AG04450 (cell line): ENCODE measurements at regions of chr16 and their contacts with region 1.

Region 1: DNA sequence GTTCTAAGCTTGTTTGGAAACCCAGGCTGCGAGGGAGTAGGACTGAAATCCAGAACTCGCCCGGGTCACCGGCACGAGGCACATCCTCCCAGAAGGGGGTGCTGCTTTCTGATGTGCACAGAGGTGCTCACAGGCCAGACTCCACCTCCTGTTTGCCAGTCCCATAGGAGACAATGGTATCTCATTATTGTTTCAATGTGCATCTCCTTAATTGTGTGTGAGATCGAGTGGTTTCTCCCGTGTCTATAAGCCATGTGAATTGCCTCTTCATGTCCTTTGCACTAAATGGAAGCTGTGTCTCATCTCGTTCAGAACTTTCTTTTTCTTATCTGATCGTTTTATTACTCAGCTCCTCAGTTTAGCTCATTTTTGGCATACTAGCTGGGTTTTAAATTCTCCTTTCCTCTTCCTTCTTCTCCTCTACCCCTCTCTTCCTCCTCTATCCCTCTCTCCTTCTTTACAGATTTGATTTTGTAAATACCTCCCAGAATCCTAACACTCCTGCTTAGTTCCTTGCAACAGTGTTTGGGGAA is 32.1 kb upstream of the PRKCB start:
- DNase-seq: no peak
- H3K4me3 ChIP-seq: no peak overlapping the region
- H3K27ac ChIP-seq: no peak overlapping the region
- H3K27me3 ChIP-seq: peaks cover 5% of the 10 kb centered on the region
- CTCF ChIP-seq: peak; percentile 53

Region 2: DNA sequence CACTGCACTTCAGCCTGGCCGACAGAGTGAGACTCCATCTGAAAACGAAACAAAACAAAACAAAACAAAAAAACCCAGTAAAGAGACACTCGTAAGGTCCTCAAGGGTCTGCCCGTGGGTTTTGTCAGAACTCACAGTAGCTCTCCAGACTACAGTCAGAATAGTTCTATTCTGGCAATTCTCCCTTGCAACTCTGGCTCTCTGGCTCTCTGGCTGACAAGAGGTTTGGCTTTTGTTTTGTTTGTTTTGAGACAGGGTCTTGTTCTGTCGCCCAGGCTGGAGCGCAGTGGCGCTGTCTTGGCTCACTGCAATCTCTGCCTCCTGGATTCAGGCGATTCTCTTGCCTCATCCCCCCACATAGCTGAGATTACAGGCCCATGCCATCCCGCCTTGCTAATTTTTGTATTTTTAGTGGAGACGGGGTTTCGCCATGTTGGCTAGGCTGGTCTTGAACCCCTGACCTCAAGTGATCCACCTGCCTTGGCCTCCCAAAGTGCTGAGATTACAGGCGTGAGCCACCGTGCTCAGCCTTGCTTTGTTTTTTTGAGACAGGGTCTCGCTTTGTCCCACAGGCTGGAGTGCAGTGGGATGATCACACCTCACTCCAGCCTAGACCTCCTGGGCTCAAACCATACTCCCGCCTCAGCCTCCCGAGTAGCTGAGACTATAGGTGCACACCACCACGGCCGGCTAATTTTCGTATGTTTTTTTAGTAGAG is 69.3 kb before region 1 on chr16:
- CTCF ChIA-PET with region 1: no interaction called
- POLR2A ChIA-PET with region 1: no interaction called
- DNase-seq: no peak
- H3K4me3 ChIP-seq: no peak overlapping the region
- H3K27ac ChIP-seq: no peak overlapping the region
- H3K27me3 ChIP-seq: no peaks in the 10 kb centered on the region
- CTCF ChIP-seq: no peak

Region 3: DNA sequence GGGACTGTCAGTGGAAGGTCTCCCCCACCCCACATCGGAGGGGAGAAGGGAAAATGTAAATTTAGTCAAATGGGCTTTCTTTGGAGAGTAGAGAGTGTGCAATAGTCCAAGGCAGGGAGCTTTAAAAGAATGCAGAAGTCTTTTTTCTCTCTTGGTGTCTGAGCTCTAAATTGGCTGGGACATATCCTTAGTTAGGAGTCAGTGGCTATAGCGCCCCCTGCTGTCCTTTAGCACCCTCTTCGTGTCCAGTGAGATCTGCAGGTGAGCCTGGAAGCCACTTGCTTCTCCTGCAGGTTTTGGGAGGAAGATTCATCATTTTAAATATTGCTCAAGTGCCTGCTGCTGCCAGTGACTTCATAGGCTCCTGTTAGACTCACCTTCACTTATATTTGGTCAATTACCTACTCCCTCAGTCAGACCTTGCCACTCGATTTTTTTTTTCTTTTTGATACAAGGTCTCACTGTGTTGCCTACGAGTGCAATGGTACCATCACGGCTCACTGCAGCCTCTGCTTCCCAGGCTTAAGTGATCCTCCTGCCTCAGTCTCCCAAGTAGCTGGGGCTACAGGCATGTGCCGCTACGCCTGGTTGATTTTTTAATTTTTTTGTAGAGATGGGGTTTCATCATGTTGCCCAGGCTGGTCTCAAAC is 206.9 kb after region 1 on chr16:
- CTCF ChIA-PET with region 1: interaction called, 31 read pairs
- POLR2A ChIA-PET with region 1: no interaction called
- DNase-seq: peak; percentile 11
- H3K4me3 ChIP-seq: no peak overlapping the region
- H3K27ac ChIP-seq: no peak overlapping the region
- H3K27me3 ChIP-seq: no peaks in the 10 kb centered on the region
- CTCF ChIP-seq: peak; percentile 74

Region 4: DNA sequence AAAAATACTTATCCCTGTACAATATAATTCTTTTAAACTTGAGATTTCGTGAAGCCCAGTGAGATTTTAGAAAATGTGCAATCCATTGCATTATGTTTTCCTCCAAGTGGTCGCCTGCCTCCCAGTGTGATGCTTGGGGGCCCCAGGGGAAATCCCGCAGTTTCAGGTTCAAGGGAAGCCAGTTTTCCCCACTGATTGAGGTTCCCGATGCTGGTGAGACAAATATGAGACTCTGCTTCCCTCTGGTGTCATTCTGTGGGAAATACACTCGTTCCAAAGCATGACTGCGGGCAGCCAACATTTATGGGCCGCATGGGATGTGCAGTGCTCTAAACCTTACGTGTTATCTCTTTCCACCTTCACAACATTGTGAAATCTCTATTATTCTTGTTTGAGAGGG is 233.0 kb after region 1 on chr16:
- CTCF ChIA-PET with region 1: interaction called, 21 read pairs
- POLR2A ChIA-PET with region 1: no interaction called
- DNase-seq: no peak
- H3K4me3 ChIP-seq: no peak overlapping the region
- H3K27ac ChIP-seq: no peak overlapping the region
- H3K27me3 ChIP-seq: no peaks in the 10 kb centered on the region
- CTCF ChIP-seq: peak; percentile 68

Region 5: DNA sequence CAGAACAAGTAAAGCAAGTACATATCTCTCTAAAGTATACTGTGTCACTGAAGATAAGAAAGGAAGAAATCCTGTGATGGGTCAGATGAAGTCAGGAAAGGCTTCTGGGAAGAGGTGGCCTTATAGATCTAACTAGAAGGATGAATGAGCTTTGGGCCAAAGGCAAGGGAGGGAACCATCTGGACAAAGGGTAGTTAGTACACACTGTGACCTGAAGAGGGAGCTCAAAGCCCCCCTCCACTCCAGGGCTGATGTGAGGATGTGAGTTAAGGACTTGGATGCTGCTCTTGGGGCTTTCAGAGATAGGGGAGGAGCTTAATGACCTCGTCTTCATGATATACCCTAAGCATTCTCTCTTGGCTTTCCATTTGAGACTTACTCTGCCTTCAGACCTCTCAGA is 267.2 kb after region 1 on chr16:
- CTCF ChIA-PET with region 1: interaction called, 10 read pairs
- POLR2A ChIA-PET with region 1: no interaction called
- DNase-seq: no peak
- H3K4me3 ChIP-seq: no peak overlapping the region
- H3K27ac ChIP-seq: no peak overlapping the region
- H3K27me3 ChIP-seq: no peaks in the 10 kb centered on the region
- CTCF ChIP-seq: peak; percentile 45